ENCODE measurements at regions of chr15 and their contacts with region 1.

Region 1: DNA sequence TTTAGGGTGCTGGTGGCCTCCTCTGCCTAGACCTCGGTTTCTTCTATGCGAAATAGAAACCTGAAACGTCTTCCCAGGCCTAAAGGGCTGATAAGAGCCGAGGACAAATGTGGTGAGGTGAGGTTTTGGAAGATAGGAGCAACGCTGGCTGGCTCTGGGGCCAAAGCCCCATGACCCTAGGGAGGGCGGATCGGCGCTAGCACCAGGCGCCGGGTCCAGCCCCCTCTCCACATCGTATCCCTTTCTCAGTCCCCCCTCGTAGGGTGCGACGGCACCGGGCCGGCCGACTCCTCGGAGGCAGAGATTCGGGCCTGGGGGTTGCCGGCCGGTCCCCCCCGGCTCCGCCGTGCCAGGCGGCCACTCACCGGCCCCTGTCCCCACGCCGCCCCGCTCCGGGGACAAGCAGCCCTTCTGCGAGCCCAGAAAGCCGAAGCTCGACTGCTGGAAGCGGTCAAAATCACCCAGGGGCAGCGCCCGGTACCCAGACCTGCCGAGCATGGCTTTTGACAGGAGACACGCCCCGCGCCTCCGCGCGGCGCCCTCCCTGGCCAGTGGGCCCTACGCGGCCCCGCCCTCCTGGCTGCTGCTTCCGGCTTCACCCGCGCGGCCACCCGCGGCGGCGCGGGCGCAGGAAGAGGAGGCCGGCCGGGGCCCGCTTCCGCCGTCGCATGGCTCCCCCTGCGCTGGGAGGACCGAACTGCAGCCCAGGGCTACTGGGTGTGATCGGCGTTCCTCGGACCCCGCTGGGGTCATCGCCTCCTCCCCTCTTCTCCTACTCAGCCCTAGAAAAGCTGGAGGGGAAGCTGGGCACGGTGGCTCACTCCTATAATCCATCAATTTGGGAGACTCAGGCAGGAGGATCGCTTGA is at the start of gene STOML1:
- DNase-seq: peak; percentile 95
- H3K4me3 ChIP-seq: peak within 1 kb of the TSS; percentile 97
- H3K27ac ChIP-seq: no peak within 1 kb of the TSS
- H3K4me1 ChIP-seq: peaks cover 38% of the 10 kb centered on the region
- CTCF ChIP-seq: peak; percentile 85
- total RNA-seq, gene STOML1: 5.7 and 8.0 TPM in 2 replicates

Region 2: DNA sequence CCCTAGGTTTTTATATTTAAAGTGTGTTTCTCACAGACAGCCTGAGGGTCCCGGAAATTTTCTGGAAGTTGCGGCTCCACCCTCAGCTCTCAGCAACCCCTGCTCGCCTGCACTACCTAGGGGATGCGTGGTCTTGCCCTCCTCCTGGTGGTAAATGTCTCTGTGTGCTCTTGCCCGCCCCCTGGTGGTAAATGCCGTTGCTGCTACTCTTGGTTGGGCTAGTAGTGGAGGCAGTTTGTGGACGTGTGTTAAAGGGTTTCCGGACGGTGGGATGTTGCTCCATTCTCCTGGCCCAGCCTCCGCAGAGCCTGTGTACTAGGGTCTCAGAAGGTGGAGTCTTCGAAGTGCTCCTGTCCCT is 27.2 kb before region 1 on chr15:
- CTCF ChIA-PET with region 1: no interaction called
- POLR2A ChIA-PET with region 1: no interaction called
- intact Hi-C with region 1: no loop called
- DNase-seq: peak; percentile 83
- H3K4me3 ChIP-seq: peak overlapping the region; percentile 50
- H3K27ac ChIP-seq: peak overlapping the region; percentile 16
- H3K4me1 ChIP-seq: peaks cover 24% of the 10 kb centered on the region
- CTCF ChIP-seq: peak; percentile 95

Region 3: DNA sequence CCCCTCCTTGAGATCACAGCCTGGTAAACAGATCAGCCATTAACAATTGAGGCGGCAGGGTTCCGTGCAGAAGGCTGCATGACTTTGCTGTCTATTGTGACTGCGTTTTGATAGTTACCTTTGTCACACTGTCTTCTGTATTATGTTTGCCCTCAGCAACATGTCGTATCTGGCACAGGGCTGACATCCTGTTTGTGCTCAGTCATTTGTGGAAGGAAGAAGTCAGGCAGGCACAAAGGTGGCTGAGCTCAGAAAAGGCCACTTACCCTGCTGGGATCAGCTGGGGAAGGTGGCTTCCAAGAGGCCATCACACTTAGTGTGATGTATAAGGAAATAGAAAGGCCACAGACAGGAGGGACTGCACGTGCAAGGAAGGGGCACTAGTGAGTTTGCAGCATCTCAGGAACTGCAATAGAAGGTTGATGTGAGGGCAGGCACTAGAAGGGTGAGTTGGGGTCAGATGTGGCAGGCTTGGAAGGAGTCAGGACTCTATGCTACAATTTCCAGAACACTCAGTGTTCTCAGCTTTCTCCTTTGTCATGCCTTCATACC is 15.9 kb after region 1 on chr15:
- CTCF ChIA-PET with region 1: interaction called, 4 read pairs
- POLR2A ChIA-PET with region 1: interaction called, 10 read pairs
- intact Hi-C with region 1: no loop called
- DNase-seq: peak; percentile 69
- H3K4me3 ChIP-seq: peak overlapping the region; percentile 14
- H3K27ac ChIP-seq: peak overlapping the region; percentile 47
- H3K4me1 ChIP-seq: peaks cover 20% of the 10 kb centered on the region
- CTCF ChIP-seq: no peak